WTC11 (cell line): ENCODE measurements at regions of chr1 and their contacts with region 1.

Region 1: GRCh38 chr1:212665241-212666115 is 34.2 kb downstream of the BATF3 start:
- DNase-seq: peak; percentile 93
- ATAC-seq: peak; percentile 94
- H3K4me3 Mint-ChIP-seq: peak overlapping the region; percentile 81
- H3K27ac Mint-ChIP-seq: no peak overlapping the region
- H3K4me1 Mint-ChIP-seq: peaks cover 19% of the 10 kb centered on the region
- H3K27me3 Mint-ChIP-seq: peaks cover 31% of the 10 kb centered on the region
- CTCF ChIP-seq: peak; percentile 81

Region 2: GRCh38 chr1:212205843-212206242 is 459.6 kb before region 1 on chr1:
- CTCF ChIA-PET with region 1: no interaction called
- POLR2A ChIA-PET with region 1: no interaction called
- DNase-seq: no peak
- ATAC-seq: no peak
- H3K4me3 Mint-ChIP-seq: no peak overlapping the region
- H3K27ac Mint-ChIP-seq: no peak overlapping the region
- H3K4me1 Mint-ChIP-seq: peaks cover 14% of the 10 kb centered on the region
- H3K27me3 Mint-ChIP-seq: no peaks in the 10 kb centered on the region
- CTCF ChIP-seq: no peak

Region 3: GRCh38 chr1:212447478-212447877 is 218.0 kb before region 1 on chr1:
- CTCF ChIA-PET with region 1: no interaction called
- POLR2A ChIA-PET with region 1: no interaction called
- DNase-seq: no peak
- ATAC-seq: no peak
- H3K4me3 Mint-ChIP-seq: no peak overlapping the region
- H3K27ac Mint-ChIP-seq: no peak overlapping the region
- H3K4me1 Mint-ChIP-seq: no peaks in the 10 kb centered on the region
- H3K27me3 Mint-ChIP-seq: no peaks in the 10 kb centered on the region
- CTCF ChIP-seq: no peak

Region 4: GRCh38 chr1:212463565-212464285 is 201.8 kb before region 1 on chr1:
- CTCF ChIA-PET with region 1: interaction called, 12 read pairs
- POLR2A ChIA-PET with region 1: no interaction called
- DNase-seq: no peak
- ATAC-seq: no peak; the same call in 1 of the 2 replicates
- H3K4me3 Mint-ChIP-seq: no peak overlapping the region
- H3K27ac Mint-ChIP-seq: no peak overlapping the region
- H3K4me1 Mint-ChIP-seq: peaks cover 41% of the 10 kb centered on the region
- H3K27me3 Mint-ChIP-seq: no peaks in the 10 kb centered on the region; the same call in none of the 2 replicates
- CTCF ChIP-seq: no peak

Region 5: GRCh38 chr1:212608209-212608955 is 57.1 kb before region 1 on chr1 and contains the start of gene ATF3:
- CTCF ChIA-PET with region 1: interaction called, 11 read pairs
- POLR2A ChIA-PET with region 1: interaction called, 17 read pairs
- DNase-seq: peak; percentile 99
- ATAC-seq: peak; percentile 84
- H3K4me3 Mint-ChIP-seq: peak within 1 kb of the TSS; percentile 89
- H3K27ac Mint-ChIP-seq: peak within 1 kb of the TSS; percentile 49; the same call in 1 of the 2 replicates
- H3K4me1 Mint-ChIP-seq: peaks cover 62% of the 10 kb centered on the region
- H3K27me3 Mint-ChIP-seq: peaks cover 64% of the 10 kb centered on the region
- CTCF ChIP-seq: no peak
- total RNA-seq, gene ATF3: 12.5 to 19.4 TPM (median 14.6 TPM) in 3 replicates

Region 6: DNA sequence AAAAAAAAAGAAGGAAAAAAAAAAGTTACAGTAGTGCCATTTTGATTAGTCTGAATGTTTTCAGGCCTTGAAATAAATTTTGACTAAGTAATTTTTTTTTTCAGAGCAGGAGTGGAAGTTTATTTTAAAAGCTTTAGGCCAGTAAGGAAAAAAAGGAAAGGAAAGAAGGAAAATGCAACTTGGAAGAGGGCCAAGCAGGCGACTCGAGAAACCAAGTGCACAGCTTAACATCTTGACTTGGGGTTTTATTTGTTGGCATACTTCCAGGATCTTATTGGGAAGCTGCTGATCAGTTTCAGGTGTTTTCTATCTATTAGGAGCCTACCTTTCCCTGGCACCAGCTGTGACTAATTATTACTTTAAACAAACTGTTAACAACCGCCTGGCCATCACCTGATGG is 15.2 kb before region 1 on chr1:
- CTCF ChIA-PET with region 1: interaction called, 15 read pairs
- POLR2A ChIA-PET with region 1: no interaction called
- DNase-seq: no peak
- ATAC-seq: no peak
- H3K4me3 Mint-ChIP-seq: no peak overlapping the region
- H3K27ac Mint-ChIP-seq: no peak overlapping the region
- H3K4me1 Mint-ChIP-seq: no peaks in the 10 kb centered on the region
- H3K27me3 Mint-ChIP-seq: no peaks in the 10 kb centered on the region; the same call in 1 of the 2 replicates
- CTCF ChIP-seq: no peak

Region 7: DNA sequence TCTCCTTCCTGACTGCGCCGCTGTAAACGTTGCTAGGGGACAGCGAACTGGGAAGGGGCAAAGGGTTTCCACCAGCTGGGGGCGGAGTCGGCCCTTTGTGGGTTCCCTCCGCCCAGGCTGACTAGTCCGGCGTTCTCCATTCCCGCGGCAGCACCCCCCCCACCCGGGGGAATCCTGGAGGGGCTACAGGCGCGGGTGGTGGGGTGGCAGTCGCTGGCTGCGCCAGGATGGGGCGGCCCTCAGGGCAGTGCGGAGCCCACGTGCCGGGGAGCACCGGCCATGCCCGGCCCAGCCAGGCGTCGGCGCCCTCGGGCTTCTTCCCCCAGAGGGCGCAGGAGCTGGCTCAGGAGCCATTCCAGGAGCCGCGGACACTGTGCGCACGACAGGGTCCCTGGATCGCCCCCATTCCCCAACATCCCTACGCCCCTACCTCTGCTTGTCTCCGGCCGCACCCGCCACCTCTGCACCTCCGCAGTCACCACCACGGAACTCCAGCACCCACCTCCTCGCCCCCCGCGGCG is 33.7 kb after region 1 on chr1:
- CTCF ChIA-PET with region 1: interaction called, 30 read pairs
- POLR2A ChIA-PET with region 1: no interaction called
- DNase-seq: peak; percentile 76
- ATAC-seq: peak; percentile 82
- H3K4me3 Mint-ChIP-seq: peak overlapping the region; percentile 63
- H3K27ac Mint-ChIP-seq: no peak overlapping the region
- H3K4me1 Mint-ChIP-seq: peaks cover 18% of the 10 kb centered on the region
- H3K27me3 Mint-ChIP-seq: peaks cover 84% of the 10 kb centered on the region
- CTCF ChIP-seq: no peak

Region 8: GRCh38 chr1:212873518-212873917 is 208.0 kb after region 1 on chr1:
- CTCF ChIA-PET with region 1: no interaction called
- POLR2A ChIA-PET with region 1: no interaction called
- DNase-seq: no peak
- ATAC-seq: no peak
- H3K4me3 Mint-ChIP-seq: no peak overlapping the region
- H3K27ac Mint-ChIP-seq: peak overlapping the region; percentile 74
- H3K4me1 Mint-ChIP-seq: peaks cover 34% of the 10 kb centered on the region
- H3K27me3 Mint-ChIP-seq: no peaks in the 10 kb centered on the region
- CTCF ChIP-seq: no peak

Region 9: GRCh38 chr1:212928323-212929291 is 263.1 kb after region 1 on chr1:
- CTCF ChIA-PET with region 1: no interaction called
- POLR2A ChIA-PET with region 1: no interaction called
- DNase-seq: no peak
- ATAC-seq: peak; percentile 80
- H3K4me3 Mint-ChIP-seq: peak overlapping the region; percentile 24
- H3K27ac Mint-ChIP-seq: peak overlapping the region; percentile 92
- H3K4me1 Mint-ChIP-seq: peaks cover 71% of the 10 kb centered on the region
- H3K27me3 Mint-ChIP-seq: peaks cover 6% of the 10 kb centered on the region; the same call in 1 of the 2 replicates
- CTCF ChIP-seq: no peak

Region 10: GRCh38 chr1:212994926-212995325 is 329.4 kb after region 1 on chr1:
- CTCF ChIA-PET with region 1: interaction called, 13 read pairs
- POLR2A ChIA-PET with region 1: no interaction called
- DNase-seq: no peak
- ATAC-seq: no peak
- H3K4me3 Mint-ChIP-seq: no peak overlapping the region
- H3K27ac Mint-ChIP-seq: peak overlapping the region; percentile 60; the same call in 1 of the 2 replicates
- H3K4me1 Mint-ChIP-seq: peaks cover 14% of the 10 kb centered on the region
- H3K27me3 Mint-ChIP-seq: no peaks in the 10 kb centered on the region
- CTCF ChIP-seq: no peak